ENCODE measurements at regions of chr11 and their contacts with region 1.

Region 1: GRCh38 chr11:131065435-131066413 is 149.4 kb upstream of the SNX19 start:
- DNase-seq: no peak
- ATAC-seq: no peak

Region 2: DNA sequence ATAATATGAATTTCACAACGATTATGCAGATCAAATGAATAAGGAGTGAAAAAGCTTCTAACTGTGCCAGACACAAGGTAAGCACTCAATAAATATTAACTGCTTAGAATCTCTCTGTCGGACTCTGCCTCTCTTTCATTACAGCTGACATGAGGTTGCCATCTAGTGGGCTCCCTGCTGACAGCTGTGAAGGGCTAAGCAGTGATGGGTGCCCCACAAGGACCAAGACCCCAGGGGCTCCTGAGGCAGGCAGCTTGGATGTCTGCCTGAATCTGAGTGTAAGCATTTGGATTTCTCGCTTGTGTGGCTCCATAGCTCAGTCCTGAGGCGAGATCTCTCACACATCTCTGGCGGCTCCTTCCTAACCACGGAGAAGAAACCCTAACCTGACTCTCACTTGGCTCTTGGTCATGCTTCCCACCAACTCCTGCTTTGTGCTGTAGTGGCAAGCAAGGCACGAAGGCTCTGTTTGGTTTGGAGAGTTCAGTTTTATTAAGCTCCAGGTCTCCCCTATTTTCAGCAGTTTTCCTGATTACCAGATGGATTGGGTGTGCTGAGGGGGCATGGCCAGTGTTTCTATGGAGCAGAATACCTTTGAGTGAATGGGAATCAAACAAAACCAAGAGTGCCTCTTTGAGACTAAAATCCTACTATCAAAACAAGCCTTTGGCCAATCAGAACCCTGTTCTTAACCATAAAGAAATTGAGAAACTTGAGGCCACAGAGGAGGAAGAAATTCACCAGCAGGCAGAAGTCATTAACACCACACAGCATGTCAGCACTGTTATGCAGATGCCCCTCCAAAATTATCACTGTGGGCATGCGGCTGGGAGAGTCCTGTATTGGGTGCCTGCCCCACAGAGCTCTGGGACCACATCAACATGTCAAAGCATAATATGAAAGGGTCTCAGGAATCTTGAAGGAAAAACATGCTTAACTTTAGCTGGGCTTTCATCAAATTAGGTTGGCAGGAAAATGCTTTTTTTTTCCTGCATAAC is 151.9 kb after region 1 on chr11:
- intact Hi-C with region 1: loop called (anchors 5 kb)
- DNase-seq: no peak
- ATAC-seq: peak; percentile 41

Region 3: GRCh38 chr11:131511794-131512193 is 446.1 kb after region 1 on chr11:
- intact Hi-C with region 1: loop called (anchors 5 kb)
- DNase-seq: peak; percentile 53
- ATAC-seq: peak; percentile 73

Region 4: DNA sequence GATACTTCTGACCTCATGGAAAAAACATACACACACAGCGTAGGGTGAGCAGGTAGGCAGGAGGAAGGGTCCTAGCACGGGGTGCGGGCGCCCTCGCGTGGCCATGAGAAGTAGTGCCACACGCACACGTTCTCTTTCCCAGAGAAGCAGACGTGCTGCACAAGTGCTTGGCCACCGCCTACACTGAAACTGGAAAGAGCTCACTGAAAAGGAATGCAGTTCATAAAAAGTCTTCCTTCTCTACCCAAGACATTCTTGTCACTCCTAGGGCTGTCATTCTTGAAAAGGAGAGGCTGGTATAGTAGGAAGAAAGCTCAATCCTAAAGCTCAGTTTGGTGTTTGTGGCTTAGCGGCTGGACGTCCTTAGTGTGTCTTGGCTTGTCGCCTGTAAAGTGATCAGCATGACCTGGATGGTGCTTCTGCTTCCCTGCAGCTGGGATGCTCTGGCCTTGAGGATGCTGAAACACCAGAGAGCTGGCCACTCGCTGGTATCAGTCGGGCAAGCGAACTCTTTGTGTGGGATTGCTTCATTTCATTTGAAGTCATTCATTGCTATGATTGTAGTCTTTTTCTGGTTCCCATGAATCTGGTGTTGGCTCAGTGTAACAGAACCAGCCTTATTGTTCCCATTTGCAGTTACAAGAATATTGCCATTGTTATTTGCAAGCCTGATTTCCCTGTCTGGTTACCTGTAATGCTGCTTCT is 608.5 kb after region 1 on chr11:
- intact Hi-C with region 1: loop called (anchors 5 kb)
- DNase-seq: peak; percentile 80
- ATAC-seq: peak; percentile 98